ENCODE measurements at regions of chrX and their contacts with region 1.

Region 1: DNA sequence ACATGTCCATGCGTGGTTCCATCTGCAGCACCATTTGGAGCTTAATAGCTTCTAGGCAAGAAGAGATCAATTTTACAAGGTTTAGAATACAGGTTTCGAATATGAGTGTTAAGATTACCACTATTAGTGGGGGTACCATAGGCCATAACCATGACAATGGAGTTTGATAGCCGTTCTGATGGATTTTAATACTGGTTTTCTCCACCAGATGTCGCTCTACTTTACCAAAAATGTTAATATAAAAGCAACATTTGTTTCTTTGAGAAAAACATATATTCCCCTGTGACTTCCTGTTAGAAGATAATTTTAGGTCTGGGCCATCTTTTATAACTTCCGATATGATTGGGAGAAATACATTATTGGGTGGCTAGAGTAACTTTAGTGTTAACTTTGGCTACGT is 499.7 kb upstream of the POU3F4 start:
- DNase-seq: no peak
- H3K4me3 Mint-ChIP-seq: no peak overlapping the region
- H3K27ac Mint-ChIP-seq: no peak overlapping the region
- H3K4me1 Mint-ChIP-seq: no peaks in the 10 kb centered on the region
- H3K27me3 Mint-ChIP-seq: no peaks in the 10 kb centered on the region

Region 2: GRCh38 chrX:83759872-83760271 is 751.5 kb after region 1 on chrX:
- intact Hi-C with region 1: loop called (anchors 2 kb)
- DNase-seq: no peak
- H3K4me3 Mint-ChIP-seq: no peak overlapping the region
- H3K27ac Mint-ChIP-seq: no peak overlapping the region
- H3K4me1 Mint-ChIP-seq: no peaks in the 10 kb centered on the region
- H3K27me3 Mint-ChIP-seq: no peaks in the 10 kb centered on the region

Region 3: DNA sequence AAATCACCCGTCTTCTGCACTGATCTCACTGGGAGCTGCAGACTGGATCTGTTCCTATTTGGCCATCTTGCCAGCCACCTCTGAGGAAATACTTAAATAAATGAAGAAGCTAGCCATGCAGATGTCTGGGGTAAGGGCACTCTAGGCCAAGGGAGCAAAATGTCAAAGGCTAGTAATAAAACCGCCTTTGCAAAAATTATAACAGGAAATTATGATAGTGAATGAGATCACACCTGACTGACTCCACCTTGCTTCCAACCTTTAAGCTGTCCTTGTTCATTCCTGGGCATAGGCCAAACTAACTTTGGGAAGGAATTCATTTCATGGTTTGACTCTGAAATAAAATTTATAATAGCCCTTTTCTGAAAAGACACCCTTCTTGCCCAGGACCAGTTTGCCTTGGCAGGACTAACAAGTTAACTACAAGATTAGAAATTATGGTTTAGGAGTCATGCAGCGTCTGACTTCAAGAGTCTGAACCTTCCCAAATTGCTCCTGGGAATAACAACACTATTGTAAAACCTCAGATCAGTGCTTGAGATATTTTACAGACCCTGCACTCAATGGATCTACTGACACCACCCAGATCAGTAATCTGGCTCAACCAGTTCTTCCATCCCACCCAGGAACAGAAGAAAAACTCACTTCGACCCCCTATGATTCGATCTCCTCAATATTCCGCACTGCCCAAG is 1740.7 kb after region 1 on chrX:
- intact Hi-C with region 1: no loop called
- DNase-seq: no peak
- H3K4me3 Mint-ChIP-seq: no peak overlapping the region
- H3K27ac Mint-ChIP-seq: no peak overlapping the region
- H3K4me1 Mint-ChIP-seq: no peaks in the 10 kb centered on the region
- H3K27me3 Mint-ChIP-seq: no peaks in the 10 kb centered on the region